ENCODE measurements at regions of chr9 and their contacts with region 1.

Region 1: GRCh38 chr9:128504485-128505413 is at the start of gene GLE1:
- DNase-seq: peak; percentile 96
- H3K4me3 Mint-ChIP-seq: peak within 1 kb of the TSS; percentile 92
- H3K27ac Mint-ChIP-seq: peak within 1 kb of the TSS; percentile 91
- H3K4me1 Mint-ChIP-seq: peaks cover 26% of the 10 kb centered on the region
- H3K27me3 Mint-ChIP-seq: no peaks in the 10 kb centered on the region
- total RNA-seq, gene GLE1: 48.7 to 51.6 TPM

Region 2: GRCh38 chr9:128034821-128035764 is 469.7 kb before region 1 on chr9:
- CTCF ChIA-PET with region 1: no interaction called
- intact Hi-C with region 1: no loop called
- DNase-seq: peak; percentile 78
- H3K4me3 Mint-ChIP-seq: no peak overlapping the region
- H3K27ac Mint-ChIP-seq: peak overlapping the region; percentile 62
- H3K4me1 Mint-ChIP-seq: peaks cover 40% of the 10 kb centered on the region
- H3K27me3 Mint-ChIP-seq: no peaks in the 10 kb centered on the region

Region 3: DNA sequence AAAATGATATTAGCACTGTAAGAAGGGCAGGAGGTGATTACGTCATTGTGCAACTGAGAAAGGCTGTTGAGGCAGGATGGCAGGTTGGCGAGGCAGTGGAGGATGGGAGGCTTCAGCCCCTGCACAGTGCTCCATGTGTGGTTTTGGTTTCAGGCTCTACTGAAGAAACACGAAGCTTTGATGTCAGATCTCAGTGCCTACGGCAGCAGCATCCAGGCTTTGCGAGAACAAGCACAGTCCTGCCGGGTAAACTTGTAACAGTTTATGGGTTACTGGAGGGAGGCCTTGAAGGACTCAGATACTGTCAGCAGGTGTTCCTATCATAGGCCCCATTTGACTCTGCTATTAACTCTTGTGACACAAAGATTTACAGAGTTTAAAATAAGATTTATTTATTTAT is 82.7 kb after region 1 on chr9:
- CTCF ChIA-PET with region 1: interaction called, 4 read pairs
- intact Hi-C with region 1: loop called (anchors 2 kb)
- DNase-seq: peak; percentile 87
- H3K4me3 Mint-ChIP-seq: peak overlapping the region; percentile 4
- H3K27ac Mint-ChIP-seq: peak overlapping the region; percentile 91
- H3K4me1 Mint-ChIP-seq: peaks cover 19% of the 10 kb centered on the region
- H3K27me3 Mint-ChIP-seq: no peaks in the 10 kb centered on the region

Measured in activated naive CD4-positive, alpha-beta T cell treated with anti-CD3 and anti-CD28 coated beads for 36 hours (primary cell).